Cardiac septum (tissue), 1 donor: ENCODE measurements at regions of chr13 and their contacts with region 1.

Region 1: GRCh38 chr13:98565726-98566565 is 11.0 kb downstream of the STK24 start:
- DNase-seq: no peak

Region 2: DNA sequence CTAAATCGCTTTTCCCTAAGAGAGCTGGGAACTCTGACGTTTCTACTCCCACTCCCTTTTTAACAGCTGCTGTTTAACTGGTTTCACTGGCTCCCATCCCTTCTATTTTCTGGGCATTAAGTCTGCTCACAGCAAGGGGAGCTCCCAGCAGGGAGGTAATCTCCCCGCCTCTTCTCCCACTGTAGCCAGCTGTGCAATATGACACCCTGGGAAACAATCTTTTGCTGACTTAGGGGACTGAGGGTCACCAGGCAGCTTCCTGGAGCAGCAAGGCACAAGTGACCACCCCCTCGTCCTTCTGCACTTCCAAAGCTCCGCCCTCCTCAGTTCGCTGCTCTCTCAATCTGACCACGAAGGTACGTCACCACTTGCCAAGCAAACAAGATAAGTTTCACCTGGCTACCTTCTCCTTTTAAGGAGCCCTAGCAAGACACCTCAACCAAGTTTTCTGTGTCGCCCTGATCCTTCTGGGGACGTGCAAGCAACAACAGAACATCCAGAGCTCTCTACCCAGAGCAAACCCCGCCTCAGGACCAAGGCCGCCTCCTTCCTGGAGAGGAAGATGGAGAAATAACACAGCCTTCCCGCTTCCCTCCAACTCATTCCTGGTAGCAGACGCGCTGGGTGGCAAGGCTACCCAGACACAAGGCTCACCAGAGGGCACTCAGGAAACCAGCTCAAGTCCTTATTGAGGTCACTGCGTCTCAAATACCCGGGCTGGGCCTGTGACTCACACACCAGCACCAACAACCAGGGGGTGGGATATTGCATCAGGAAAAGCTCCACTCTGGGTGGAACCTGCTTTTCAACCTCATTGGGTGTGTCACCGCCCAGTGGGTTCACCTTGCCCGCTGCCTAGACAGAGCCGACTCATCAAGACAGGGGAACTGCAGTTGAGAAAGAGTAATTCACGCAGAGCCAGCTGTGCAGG is 81.4 kb before region 1 on chr13:
- intact Hi-C with region 1: loop called (anchors 5 kb)
- DNase-seq: peak; percentile 82

Region 3: GRCh38 chr13:98509271-98510155 is 56.4 kb before region 1 on chr13:
- intact Hi-C with region 1: loop called (anchors 2 kb)
- DNase-seq: no peak

Region 4: DNA sequence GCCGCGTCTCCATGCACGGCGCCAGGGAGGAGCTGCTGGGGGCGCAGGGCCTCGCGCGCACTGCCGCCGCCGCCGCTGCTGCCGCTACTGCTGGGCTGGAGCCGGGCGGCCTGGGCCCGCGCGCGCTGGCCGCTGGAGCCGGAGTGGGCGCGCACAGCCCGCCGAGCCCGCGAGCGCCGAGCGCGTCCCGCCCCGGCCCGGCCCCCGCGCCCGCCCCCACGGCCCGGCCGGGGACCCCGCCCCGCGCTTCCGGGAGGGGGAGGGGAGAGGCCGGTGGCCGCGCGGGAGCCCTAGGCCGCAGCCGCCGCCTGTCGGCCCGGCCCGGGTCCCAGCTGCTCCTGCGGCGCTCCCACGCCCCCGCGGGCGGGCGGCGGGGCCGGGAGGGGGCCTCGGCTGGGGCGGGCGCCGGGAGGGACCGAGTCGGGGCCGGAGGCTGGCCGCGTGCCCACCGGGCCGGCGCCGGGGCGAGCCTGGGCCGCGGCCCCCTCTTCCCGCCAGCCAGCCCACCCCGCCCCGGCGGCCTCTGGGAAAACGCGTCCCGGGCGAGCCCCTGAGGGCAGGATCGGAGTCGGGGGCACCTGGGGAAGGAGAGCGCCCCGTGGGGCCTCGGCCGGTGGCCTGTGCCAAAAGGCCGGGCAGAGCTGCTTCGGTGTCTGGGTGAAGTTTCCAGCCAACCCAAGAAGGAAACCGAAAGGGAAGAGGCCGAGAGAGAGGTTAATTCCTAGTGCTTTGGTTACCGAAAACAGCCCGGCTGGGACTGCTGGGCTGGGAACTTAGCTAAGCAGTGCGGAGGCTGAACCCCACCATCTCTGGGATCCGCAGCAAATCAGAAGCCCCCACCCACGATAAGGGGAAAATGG is 11.2 kb after region 1 on chr13 and contains the start of gene STK24:
- intact Hi-C with region 1: loop called (anchors 1 kb)
- DNase-seq: peak; percentile 85
- total RNA-seq, gene STK24: 63.5 TPM

Region 5: GRCh38 chr13:98598043-98598442 is 32.1 kb after region 1 on chr13:
- intact Hi-C with region 1: no loop called
- DNase-seq: no peak